Caco-2 (cell line): ENCODE measurements at regions of chrX and their contacts with region 1.

Region 1: GRCh38 chrX:66149519-66149918 is 14.5 kb upstream of the HEPH start:
- DNase-seq: no peak
- H3K4me3 ChIP-seq: no peak overlapping the region
- H3K4me3 Mint-ChIP-seq: no peak overlapping the region
- H3K27ac Mint-ChIP-seq: no peak overlapping the region
- H3K4me1 ChIP-seq: no peaks in the 10 kb centered on the region
- H3K4me1 Mint-ChIP-seq: no peaks in the 10 kb centered on the region
- H3K27me3 ChIP-seq: no peaks in the 10 kb centered on the region
- H3K27me3 Mint-ChIP-seq: no peaks in the 10 kb centered on the region
- CTCF ChIP-seq: no peak

Region 2: GRCh38 chrX:65971151-65971550 is 178.4 kb before region 1 on chrX:
- CTCF ChIA-PET with region 1: no interaction called
- POLR2A ChIA-PET with region 1: no interaction called
- intact Hi-C with region 1: no loop called
- DNase-seq: no peak
- H3K4me3 ChIP-seq: no peak overlapping the region
- H3K4me3 Mint-ChIP-seq: no peak overlapping the region
- H3K27ac Mint-ChIP-seq: no peak overlapping the region
- H3K4me1 ChIP-seq: no peaks in the 10 kb centered on the region
- H3K4me1 Mint-ChIP-seq: no peaks in the 10 kb centered on the region
- H3K27me3 ChIP-seq: no peaks in the 10 kb centered on the region
- H3K27me3 Mint-ChIP-seq: peaks cover 6% of the 10 kb centered on the region
- CTCF ChIP-seq: no peak

Region 3: GRCh38 chrX:66163849-66164411 is 14.4 kb after region 1 on chrX and contains the start of gene HEPH:
- CTCF ChIA-PET with region 1: no interaction called
- POLR2A ChIA-PET with region 1: no interaction called
- intact Hi-C with region 1: loop called (anchors 2 kb)
- DNase-seq: peak in 1 of 2 experiments; percentile 5
- H3K4me3 ChIP-seq: peak within 1 kb of the TSS; percentile 42
- H3K4me3 Mint-ChIP-seq: peak within 1 kb of the TSS; percentile 76
- H3K27ac Mint-ChIP-seq: peak within 1 kb of the TSS; percentile 89
- H3K4me1 ChIP-seq: 0 out of 2 replicates have a peak, but pooled peaks cover 8% of the 10 kb centered on the region
- H3K4me1 Mint-ChIP-seq: peaks cover 6% of the 10 kb centered on the region
- H3K27me3 ChIP-seq: no peaks in the 10 kb centered on the region
- H3K27me3 Mint-ChIP-seq: no peaks in the 10 kb centered on the region
- CTCF ChIP-seq: no peak
- total RNA-seq, gene HEPH: 27.9 and 31.1 TPM in 2 replicates